ENCODE measurements at regions of chr6 and their contacts with region 1.

Region 1: GRCh38 chr6:69732640-69733039 is 64.2 kb downstream of the LMBRD1 start:
- DNase-seq: no peak
- H3K4me3 Mint-ChIP-seq: no peak overlapping the region
- H3K27ac Mint-ChIP-seq: no peak overlapping the region
- H3K4me1 Mint-ChIP-seq: no peaks in the 10 kb centered on the region
- H3K27me3 Mint-ChIP-seq: no peaks in the 10 kb centered on the region

Region 2: GRCh38 chr6:68634726-68635411 is 1097.8 kb before region 1 on chr6 and contains the start of gene ADGRB3:
- CTCF ChIA-PET with region 1: no interaction called
- intact Hi-C with region 1: loop called (anchors 5 kb)
- DNase-seq: peak; percentile 25
- H3K4me3 Mint-ChIP-seq: peak within 1 kb of the TSS; percentile 77
- H3K27ac Mint-ChIP-seq: no peak within 1 kb of the TSS
- H3K4me1 Mint-ChIP-seq: peaks cover 18% of the 10 kb centered on the region
- H3K27me3 Mint-ChIP-seq: peaks cover 52% of the 10 kb centered on the region
- total RNA-seq, gene ADGRB3: not detected

Region 3: GRCh38 chr6:68967549-68968300 is 764.9 kb before region 1 on chr6:
- CTCF ChIA-PET with region 1: no interaction called
- intact Hi-C with region 1: loop called (anchors 10 kb)
- DNase-seq: peak; percentile 68
- H3K4me3 Mint-ChIP-seq: no peak overlapping the region
- H3K27ac Mint-ChIP-seq: no peak overlapping the region
- H3K4me1 Mint-ChIP-seq: peaks cover 7% of the 10 kb centered on the region
- H3K27me3 Mint-ChIP-seq: peaks cover 2% of the 10 kb centered on the region

Region 4: DNA sequence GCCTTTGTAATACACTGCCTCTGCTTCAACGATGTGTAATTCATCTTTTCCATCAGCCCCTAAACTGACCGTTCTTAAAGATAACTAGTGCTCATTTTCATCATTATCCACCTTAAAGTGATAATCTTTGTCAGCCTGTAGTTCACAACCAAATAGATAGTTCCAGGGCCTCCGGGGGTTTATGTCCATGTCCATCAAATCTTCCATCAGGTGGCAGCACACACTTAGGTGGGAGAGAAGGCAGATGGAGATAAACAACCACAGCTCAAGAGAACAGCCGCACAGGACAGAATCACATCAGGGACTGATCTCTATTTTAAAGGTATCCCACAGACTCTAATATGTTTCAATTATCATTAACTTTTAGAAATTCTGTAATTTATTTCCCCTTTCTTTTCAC is 26.7 kb before region 1 on chr6:
- CTCF ChIA-PET with region 1: no interaction called
- intact Hi-C with region 1: no loop called
- DNase-seq: no peak
- H3K4me3 Mint-ChIP-seq: no peak overlapping the region
- H3K27ac Mint-ChIP-seq: no peak overlapping the region
- H3K4me1 Mint-ChIP-seq: peaks cover 3% of the 10 kb centered on the region
- H3K27me3 Mint-ChIP-seq: no peaks in the 10 kb centered on the region

Region 5: DNA sequence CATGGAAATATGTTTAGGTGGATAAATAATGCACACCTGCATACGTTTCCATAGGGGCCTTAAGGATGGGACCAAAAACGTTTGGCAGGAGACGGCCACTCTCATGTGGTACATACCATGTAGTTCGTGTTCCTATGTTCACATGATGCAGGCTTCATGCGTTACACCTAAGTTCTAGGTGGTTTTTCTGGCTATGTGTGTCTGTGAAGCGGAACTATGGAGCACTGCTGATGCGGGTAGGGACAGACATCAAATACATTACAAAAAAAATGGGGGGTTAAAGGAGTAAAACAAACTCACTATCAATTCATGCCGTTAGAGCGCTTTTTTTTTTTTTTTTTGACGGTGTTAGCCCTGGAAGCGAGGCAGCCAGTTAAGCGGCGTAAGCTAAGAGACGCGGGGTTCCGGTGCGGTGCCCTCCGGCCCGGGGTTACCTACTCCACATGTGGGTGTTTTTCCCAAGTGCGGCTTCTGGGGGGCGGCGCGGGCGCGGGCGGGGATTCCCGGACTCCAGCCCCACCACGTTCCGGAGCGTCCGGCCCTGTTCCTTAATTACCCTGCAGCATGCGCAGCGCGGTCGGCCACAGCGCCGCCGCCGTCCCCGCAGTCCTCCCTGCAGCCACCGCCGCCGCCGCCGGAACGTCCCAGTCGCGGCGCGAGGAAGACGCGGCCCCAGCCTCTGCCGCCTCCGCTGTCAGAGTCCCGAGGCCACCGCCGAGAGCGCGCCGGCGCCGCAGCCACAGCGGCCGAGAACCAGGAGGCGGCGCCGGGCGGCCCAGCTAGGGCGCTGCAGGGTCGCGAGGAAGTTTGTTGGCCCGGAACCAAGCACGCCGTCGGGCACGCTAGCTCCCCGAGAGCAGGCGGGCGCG is 134.4 kb after region 1 on chr6:
- CTCF ChIA-PET with region 1: interaction called, 5 read pairs
- intact Hi-C with region 1: loop called (anchors 1 kb)
- DNase-seq: peak; percentile 64
- H3K4me3 Mint-ChIP-seq: peak overlapping the region; percentile 70
- H3K27ac Mint-ChIP-seq: no peak overlapping the region
- H3K4me1 Mint-ChIP-seq: peaks cover 20% of the 10 kb centered on the region
- H3K27me3 Mint-ChIP-seq: peaks cover 5% of the 10 kb centered on the region

Region 6: DNA sequence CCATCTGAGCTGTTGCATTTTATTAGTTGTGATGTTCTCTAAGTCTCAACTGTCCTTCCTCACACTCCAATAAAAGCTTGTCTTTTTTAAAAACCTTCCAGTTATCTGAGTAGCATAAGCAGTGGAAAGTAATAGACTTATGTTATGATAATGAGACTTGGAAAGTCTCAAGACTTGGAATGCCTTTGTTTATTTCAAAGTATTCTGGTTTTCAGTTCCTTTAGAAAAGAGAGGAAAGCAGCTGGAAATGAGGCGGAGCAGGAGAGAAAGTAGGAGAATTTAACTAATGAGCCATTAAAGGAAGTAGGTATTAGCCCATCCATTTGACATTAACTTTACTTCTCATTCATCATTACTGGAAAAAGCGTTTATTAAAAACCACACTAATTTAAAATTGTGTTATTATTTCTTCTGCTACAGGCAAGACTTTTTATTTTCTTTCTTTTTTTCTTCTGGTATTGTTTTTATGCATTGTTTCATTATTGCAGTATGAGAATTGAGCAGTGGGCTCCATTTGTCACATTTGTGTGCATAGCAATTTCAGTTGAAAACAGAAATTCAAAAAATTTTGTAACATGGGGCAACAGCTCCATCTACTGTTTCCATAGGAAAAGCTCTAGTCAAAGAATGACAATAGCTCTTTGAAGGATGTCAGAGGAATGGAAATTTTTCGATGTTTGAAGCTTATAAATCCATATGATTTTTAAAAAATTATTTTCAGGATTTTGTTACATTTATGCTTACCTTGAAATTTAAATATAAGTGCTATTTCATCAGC is 375.4 kb after region 1 on chr6:
- CTCF ChIA-PET with region 1: no interaction called
- intact Hi-C with region 1: loop called (anchors 1 kb)
- DNase-seq: no peak
- H3K4me3 Mint-ChIP-seq: no peak overlapping the region
- H3K27ac Mint-ChIP-seq: no peak overlapping the region
- H3K4me1 Mint-ChIP-seq: no peaks in the 10 kb centered on the region
- H3K27me3 Mint-ChIP-seq: peaks cover 14% of the 10 kb centered on the region

Measured in activated naive CD4-positive, alpha-beta T cell treated with anti-CD3 and anti-CD28 coated beads for 36 hours (primary cell).